ENCODE measurements at regions of chr2 and their contacts with region 1.

Region 1: DNA sequence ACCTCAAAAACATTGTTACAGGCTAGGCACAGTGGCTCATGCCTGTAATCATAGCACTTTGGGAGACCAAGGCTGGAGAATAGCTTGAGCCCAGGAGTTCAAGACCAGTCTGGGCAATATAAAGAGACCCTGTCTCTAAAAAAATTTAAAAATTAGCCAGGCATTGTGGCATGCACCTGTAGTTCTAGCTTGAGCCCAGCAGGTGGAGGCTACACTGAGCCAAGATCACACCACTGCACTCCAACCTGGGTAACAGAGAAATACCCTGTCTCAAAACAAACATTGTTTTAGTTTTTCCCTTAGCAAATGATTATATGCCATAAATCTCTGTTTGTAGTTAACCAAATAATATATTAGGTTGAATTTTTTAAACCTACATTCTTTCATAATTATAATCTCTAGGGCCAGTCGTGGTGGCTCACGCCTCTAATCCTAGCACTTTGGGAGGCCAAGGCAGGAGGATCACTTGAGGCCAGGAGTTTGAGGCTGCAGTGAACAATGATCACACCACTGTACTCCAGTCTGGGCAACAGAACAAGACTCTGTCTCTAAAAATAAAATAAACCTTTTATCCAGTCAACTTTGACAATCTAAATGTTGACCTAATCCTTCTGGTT is 13.3 kb upstream of the CYP20A1 start:
- DNase-seq: peak; percentile 52
- H3K4me3 Mint-ChIP-seq: no peak overlapping the region
- H3K27ac Mint-ChIP-seq: no peak overlapping the region
- H3K4me1 Mint-ChIP-seq: no peaks in the 10 kb centered on the region
- H3K27me3 Mint-ChIP-seq: no peaks in the 10 kb centered on the region

Region 2: GRCh38 chr2:203238704-203239526 is 13.4 kb after region 1 on chr2 and contains the start of gene CYP20A1:
- CTCF ChIA-PET with region 1: interaction called, 12 read pairs
- DNase-seq: peak; percentile 97
- H3K4me3 Mint-ChIP-seq: peak within 1 kb of the TSS; percentile 91
- H3K27ac Mint-ChIP-seq: peak within 1 kb of the TSS; percentile 100
- H3K4me1 Mint-ChIP-seq: peaks cover 37% of the 10 kb centered on the region
- H3K27me3 Mint-ChIP-seq: peaks cover 4% of the 10 kb centered on the region

Region 3: GRCh38 chr2:203282101-203282500 is 56.6 kb after region 1 on chr2:
- CTCF ChIA-PET with region 1: no interaction called
- DNase-seq: no peak
- H3K4me3 Mint-ChIP-seq: no peak overlapping the region
- H3K27ac Mint-ChIP-seq: no peak overlapping the region
- H3K4me1 Mint-ChIP-seq: no peaks in the 10 kb centered on the region
- H3K27me3 Mint-ChIP-seq: no peaks in the 10 kb centered on the region

Region 4: DNA sequence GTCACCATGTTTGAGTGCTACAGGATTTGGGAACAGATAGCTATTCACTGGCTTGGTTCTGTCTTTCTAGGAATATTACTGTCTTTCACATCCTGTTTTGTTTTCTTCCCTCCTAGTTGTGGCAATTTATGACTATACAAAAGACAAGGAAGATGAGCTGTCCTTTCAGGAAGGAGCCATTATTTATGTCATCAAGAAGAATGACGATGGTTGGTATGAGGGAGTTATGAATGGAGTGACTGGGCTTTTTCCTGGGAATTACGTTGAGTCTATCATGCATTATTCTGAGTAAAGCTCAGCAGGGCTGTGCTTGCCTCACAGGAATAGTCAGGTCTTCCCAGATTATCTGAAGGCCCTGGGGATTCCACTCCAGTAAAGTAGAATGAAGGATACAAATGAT is 201.5 kb after region 1 on chr2:
- CTCF ChIA-PET with region 1: no interaction called
- DNase-seq: no peak
- H3K4me3 Mint-ChIP-seq: no peak overlapping the region
- H3K27ac Mint-ChIP-seq: no peak overlapping the region
- H3K4me1 Mint-ChIP-seq: peaks cover 2% of the 10 kb centered on the region
- H3K27me3 Mint-ChIP-seq: no peaks in the 10 kb centered on the region

Region 5: GRCh38 chr2:203453858-203454451 is 228.4 kb after region 1 on chr2:
- CTCF ChIA-PET with region 1: interaction called, 17 read pairs
- DNase-seq: peak; percentile 44
- H3K4me3 Mint-ChIP-seq: no peak overlapping the region
- H3K27ac Mint-ChIP-seq: no peak overlapping the region
- H3K4me1 Mint-ChIP-seq: no peaks in the 10 kb centered on the region
- H3K27me3 Mint-ChIP-seq: no peaks in the 10 kb centered on the region